ENCODE measurements at regions of chr7 and their contacts with region 1.

Region 1: DNA sequence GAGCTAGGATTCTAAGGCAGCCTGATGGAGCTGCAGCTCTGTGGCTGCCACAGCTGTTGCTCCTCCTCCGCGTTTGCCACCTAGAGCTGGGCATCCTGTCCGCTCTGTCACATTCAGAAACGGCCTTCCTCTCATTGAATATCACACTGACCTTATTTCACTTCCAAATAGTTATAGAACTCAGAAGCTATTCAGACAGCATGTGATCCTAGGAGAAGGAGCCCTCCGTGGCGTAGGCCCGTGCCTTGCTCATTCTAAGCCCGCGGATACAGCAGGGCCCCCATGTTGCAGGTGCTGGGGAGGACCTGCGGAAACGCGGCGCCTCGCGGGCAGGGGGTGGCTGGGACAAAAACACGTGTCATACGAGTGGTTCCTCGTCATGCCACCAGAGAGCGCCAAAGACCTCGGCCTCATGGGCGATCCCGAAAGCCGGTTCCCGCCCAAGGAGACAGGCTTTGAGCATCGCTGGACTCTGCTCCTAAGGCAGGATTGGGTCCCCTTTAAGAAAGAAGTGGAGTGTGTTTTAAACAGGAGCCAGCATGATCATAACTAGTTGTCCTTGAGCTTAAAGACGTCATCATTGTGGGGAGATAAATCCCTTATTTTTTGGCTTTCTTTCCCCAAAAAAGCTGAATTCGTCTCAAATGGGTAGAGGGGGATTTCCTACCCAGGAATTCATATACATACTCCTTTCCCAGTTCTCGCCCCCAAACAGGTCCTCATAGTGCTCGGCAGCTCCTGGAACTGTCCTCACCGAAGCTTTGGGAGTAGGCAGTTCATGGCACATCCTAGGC is 17.9 kb upstream of the FIGNL1 start:
- DNase-seq: peak; percentile 52
- ATAC-seq: peak; percentile 93
- H3K4me3 ChIP-seq: no peak overlapping the region
- H3K27ac ChIP-seq: no peak overlapping the region
- H3K4me1 ChIP-seq: peaks cover 2 to 5% of the 10 kb centered on the region in 2 experiments; a peak in 3 of 4 replicates
- H3K27me3 ChIP-seq: no peaks in the 10 kb centered on the region
- CTCF ChIP-seq: peak; percentile 78 to 85 (median 82)
- POLR2A ChIP-seq: no peak
- RAD21 ChIP-seq: peak; percentile 97

Region 2: DNA sequence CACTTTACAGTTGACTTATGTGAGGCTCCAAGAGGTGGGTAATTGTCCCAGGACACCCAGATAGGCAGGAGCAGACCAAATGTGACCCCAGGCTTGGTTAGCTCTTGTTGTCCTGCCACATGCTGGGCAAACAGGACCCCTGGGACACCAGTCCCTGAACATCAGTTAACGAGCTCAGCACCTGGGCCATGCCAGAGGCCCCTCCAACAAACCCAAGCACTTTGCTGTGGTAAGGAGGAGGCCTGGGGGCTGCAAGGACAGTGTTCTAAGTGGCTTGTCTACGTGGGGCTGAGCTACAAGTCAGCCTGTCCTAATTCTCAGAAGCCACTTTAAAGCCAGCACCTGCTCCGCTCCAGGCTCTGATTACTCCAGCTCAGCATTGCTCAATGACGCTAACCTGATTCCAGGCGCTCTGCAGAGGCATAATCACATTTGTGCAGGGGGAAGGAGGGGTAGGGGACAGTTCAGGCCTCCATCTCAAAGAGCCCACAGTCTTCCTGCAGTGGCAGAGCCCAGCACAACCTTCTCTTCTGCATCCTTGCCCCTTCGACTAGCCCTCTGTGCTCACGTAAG is 40.0 kb after region 1 on chr7:
- CTCF ChIA-PET with region 1: no interaction called
- POLR2A ChIA-PET with region 1: no interaction called
- RAD21 ChIA-PET with region 1: no interaction called
- intact Hi-C with region 1: no loop called
- DNase-seq: no peak
- ATAC-seq: no peak
- H3K4me3 ChIP-seq: no peak overlapping the region
- H3K27ac ChIP-seq: no peak overlapping the region
- H3K4me1 ChIP-seq: no peaks in the 10 kb centered on the region
- H3K27me3 ChIP-seq: no peaks in the 10 kb centered on the region
- CTCF ChIP-seq: no peak
- POLR2A ChIP-seq: no peak
- RAD21 ChIP-seq: no peak

Region 3: GRCh38 chr7:50632561-50633413 is 164.8 kb after region 1 on chr7:
- CTCF ChIA-PET with region 1: interaction called, 4 read pairs
- POLR2A ChIA-PET with region 1: no interaction called
- RAD21 ChIA-PET with region 1: no interaction called
- intact Hi-C with region 1: loop called (anchors 2 kb)
- DNase-seq: peak; percentile 19
- ATAC-seq: peak; percentile 92
- H3K4me3 ChIP-seq: no peak overlapping the region
- H3K27ac ChIP-seq: no peak overlapping the region
- H3K4me1 ChIP-seq: peaks cover 6 to 7% of the 10 kb centered on the region in 2 experiments; a peak in 2 of 4 replicates
- H3K27me3 ChIP-seq: no peaks in the 10 kb centered on the region
- CTCF ChIP-seq: peak; percentile 58 to 93 (median 87); a peak in 5 of 6 replicates
- POLR2A ChIP-seq: no peak
- RAD21 ChIP-seq: peak; percentile 47; the same call in 1 of the 2 replicates

Region 4: DNA sequence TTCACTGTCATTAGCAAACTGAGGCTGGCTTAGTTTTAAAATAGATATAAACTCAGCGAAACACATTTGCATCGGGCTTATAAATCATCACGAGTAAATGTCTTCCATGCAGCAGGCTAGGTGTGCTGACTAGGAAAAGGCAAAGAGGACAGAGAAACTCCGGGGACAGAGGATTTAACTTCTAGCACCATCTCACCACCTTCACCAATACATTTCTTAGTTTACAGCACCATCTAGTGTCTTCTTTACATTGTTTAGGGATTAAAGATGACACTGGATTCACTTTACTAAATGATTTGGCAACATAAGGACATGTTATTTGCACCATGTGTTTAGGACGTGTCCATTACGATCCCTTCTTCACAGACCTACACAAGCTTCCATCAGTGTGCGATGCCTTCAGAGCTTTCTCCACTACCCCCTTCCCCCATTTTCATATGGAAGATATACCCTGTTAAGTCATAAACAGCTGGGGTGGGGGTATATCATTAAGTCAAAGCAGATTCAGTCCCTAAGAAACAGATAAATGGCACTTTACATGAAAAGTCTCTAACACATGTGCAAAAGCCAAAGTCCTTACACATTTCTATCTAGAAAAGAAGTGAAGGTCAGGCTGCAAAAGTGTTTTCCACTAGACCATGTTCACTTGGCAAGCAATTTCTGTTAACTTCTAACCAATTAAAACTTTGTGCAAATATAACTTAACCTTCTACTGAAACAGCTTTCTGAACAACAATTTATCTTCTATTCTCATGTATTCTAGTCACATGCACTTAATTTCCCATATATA is 211.4 kb after region 1 on chr7:
- CTCF ChIA-PET with region 1: interaction called, 14 read pairs
- POLR2A ChIA-PET with region 1: no interaction called
- RAD21 ChIA-PET with region 1: no interaction called
- intact Hi-C with region 1: loop called (anchors 1 kb)
- DNase-seq: peak; percentile 18
- ATAC-seq: peak; percentile 82
- H3K4me3 ChIP-seq: no peak overlapping the region
- H3K27ac ChIP-seq: no peak overlapping the region
- H3K4me1 ChIP-seq: no peaks in the 10 kb centered on the region
- H3K27me3 ChIP-seq: no peaks in the 10 kb centered on the region
- CTCF ChIP-seq: peak in 2 of 3 experiments; percentile 39 to 42; a peak in 2 of 6 replicates
- POLR2A ChIP-seq: no peak
- RAD21 ChIP-seq: peak; percentile 75

Region 5: DNA sequence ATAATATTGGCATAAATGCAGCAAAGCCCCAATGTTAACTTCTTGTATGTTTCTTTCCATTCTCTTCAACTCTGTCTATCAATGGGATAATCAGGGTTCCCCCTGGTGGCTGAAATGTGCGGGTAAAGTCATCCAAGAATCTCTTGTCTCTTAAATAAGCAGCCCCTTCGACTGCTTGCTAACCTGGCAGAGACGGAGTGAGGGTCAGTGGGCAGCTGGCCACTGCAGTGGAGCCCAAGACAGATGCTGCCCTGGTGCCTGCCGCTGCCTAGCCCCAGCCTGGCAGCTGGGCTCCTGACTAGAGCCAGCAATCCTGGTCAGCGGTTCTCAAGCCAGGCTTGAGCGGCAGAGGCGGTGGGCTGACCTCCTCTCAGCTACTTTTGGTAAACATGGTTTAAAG is 599.7 kb after region 1 on chr7:
- CTCF ChIA-PET with region 1: no interaction called
- POLR2A ChIA-PET with region 1: no interaction called
- RAD21 ChIA-PET with region 1: no interaction called
- intact Hi-C with region 1: loop called (anchors 1 kb)
- DNase-seq: peak; percentile 35
- ATAC-seq: peak; percentile 83
- H3K4me3 ChIP-seq: no peak overlapping the region
- H3K27ac ChIP-seq: no peak overlapping the region
- H3K4me1 ChIP-seq: peaks cover 0 to 2% of the 10 kb centered on the region in 2 experiments; a peak in 1 of 4 replicates
- H3K27me3 ChIP-seq: no peaks in the 10 kb centered on the region
- CTCF ChIP-seq: peak; percentile 49 to 85 (median 77); a peak in 5 of 6 replicates
- POLR2A ChIP-seq: no peak
- RAD21 ChIP-seq: peak; percentile 69

Region 6: GRCh38 chr7:51141451-51142003 is 673.5 kb after region 1 on chr7:
- CTCF ChIA-PET with region 1: interaction called, 13 read pairs
- POLR2A ChIA-PET with region 1: no interaction called
- RAD21 ChIA-PET with region 1: interaction called in 1 of 2 experiments, 3 read pairs
- intact Hi-C with region 1: loop called (anchors 1 kb)
- DNase-seq: no peak
- ATAC-seq: peak; percentile 46; the same call in 1 of the 2 replicates
- H3K4me3 ChIP-seq: no peak overlapping the region
- H3K27ac ChIP-seq: no peak overlapping the region
- H3K4me1 ChIP-seq: peaks cover 8 to 12% of the 10 kb centered on the region in 2 experiments
- H3K27me3 ChIP-seq: no peaks in the 10 kb centered on the region
- CTCF ChIP-seq: peak; percentile 44 to 60 (median 47); a peak in 5 of 6 replicates
- POLR2A ChIP-seq: no peak
- RAD21 ChIP-seq: peak; percentile 76

Measured in HCT116 (cell line).